CD14-positive monocyte (primary cell): ENCODE measurements at regions of chr12 and their contacts with region 1.

Region 1: GRCh38 chr12:113239811-113240331 is 18.6 kb downstream of the TPCN1 start:
- DNase-seq: no peak
- H3K4me3 ChIP-seq: peak overlapping the region in 1 of 3 experiments; percentile 31
- H3K4me3 Mint-ChIP-seq: no peak overlapping the region
- H3K27ac ChIP-seq: peak overlapping the region; percentile 43 to 86
- H3K27ac Mint-ChIP-seq: peak overlapping the region; percentile 85 to 97 (median 94)
- H3K4me1 ChIP-seq: peaks cover 72 to 80% of the 10 kb centered on the region in 2 donors
- H3K4me1 Mint-ChIP-seq: peaks cover 80% of the 10 kb centered on the region
- H3K27me3 ChIP-seq: no peaks in the 10 kb centered on the region
- H3K27me3 Mint-ChIP-seq: peaks cover 0 to 7% (median 0%) of the 10 kb centered on the region in 3 donors
- CTCF ChIP-seq: no peak

Region 2: GRCh38 chr12:113196996-113197395 is 42.9 kb before region 1 on chr12:
- intact Hi-C with region 1: loop called (anchors 5 kb)
- DNase-seq: peak; percentile 76 to 85 (median 80)
- H3K4me3 ChIP-seq: no peak overlapping the region
- H3K4me3 Mint-ChIP-seq: no peak overlapping the region
- H3K27ac ChIP-seq: no peak overlapping the region
- H3K27ac Mint-ChIP-seq: peak overlapping the region in 2 of 7 donors; percentile 37 to 43
- H3K4me1 ChIP-seq: peaks cover 36 to 37% of the 10 kb centered on the region in 2 donors
- H3K4me1 Mint-ChIP-seq: peaks cover 43% of the 10 kb centered on the region
- H3K27me3 ChIP-seq: no peaks in the 10 kb centered on the region
- H3K27me3 Mint-ChIP-seq: peaks cover 0 to 1% (median 1%) of the 10 kb centered on the region in 3 donors
- CTCF ChIP-seq: peak; percentile 79

Region 3: DNA sequence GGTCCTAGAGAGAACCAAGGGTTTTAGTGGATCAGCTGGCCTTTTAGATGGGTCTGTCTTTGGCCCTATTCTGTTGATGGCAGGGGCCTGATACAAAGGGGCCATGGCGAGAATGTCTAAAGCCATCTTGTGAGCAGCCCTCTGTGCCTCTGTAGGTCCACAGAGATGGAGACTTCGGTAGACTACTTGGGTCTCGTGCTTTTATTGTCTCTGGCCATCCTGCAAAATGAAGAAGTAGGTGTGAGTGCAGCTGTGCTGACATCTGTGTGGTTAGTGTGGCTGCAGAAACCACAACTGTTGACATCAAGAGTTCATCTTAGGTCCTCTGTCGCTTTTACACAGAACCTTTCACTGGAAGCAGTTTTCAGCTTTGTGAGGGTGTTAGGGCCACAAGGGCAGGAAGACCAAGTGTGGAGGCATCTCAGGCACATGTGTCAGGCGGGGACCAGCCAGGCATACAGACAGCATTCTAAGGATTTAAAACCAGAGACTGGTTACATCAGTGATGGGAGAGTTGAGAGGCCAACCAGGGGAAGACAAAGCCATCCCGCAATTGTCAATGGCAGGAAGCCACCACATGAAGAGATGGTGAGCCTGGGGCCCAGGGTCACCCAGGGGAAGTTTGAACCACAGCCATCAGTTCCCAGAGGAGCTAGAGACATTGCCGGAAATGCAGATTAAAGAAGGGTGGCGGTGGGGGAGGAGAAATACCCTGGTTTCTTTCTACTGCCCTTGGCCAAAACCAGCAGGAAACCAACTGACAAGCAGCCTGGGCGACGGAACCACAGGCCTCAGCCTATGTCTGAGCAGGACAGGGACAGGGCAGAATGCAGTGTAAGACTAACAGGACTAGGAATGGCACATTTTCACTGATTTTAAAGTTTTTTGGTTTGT is 31.6 kb before region 1 on chr12:
- intact Hi-C with region 1: loop called in 1 of 2 experiments (anchors 5 kb)
- DNase-seq: peak; percentile 85 to 94 (median 91)
- H3K4me3 ChIP-seq: peak overlapping the region in 1 of 3 experiments; percentile 50
- H3K4me3 Mint-ChIP-seq: peak overlapping the region; percentile 53 to 82
- H3K27ac ChIP-seq: peak overlapping the region; percentile 76 to 89
- H3K27ac Mint-ChIP-seq: peak overlapping the region; percentile 98 to 100 (median 99)
- H3K4me1 ChIP-seq: peaks cover 89 to 99% of the 10 kb centered on the region in 2 donors
- H3K4me1 Mint-ChIP-seq: peaks cover 81% of the 10 kb centered on the region
- H3K27me3 ChIP-seq: no peaks in the 10 kb centered on the region
- H3K27me3 Mint-ChIP-seq: peaks cover 0 to 8% (median 0%) of the 10 kb centered on the region in 3 donors
- CTCF ChIP-seq: no peak

Region 4: GRCh38 chr12:113271853-113272561 is 32.1 kb after region 1 on chr12:
- intact Hi-C with region 1: loop called (anchors 5 kb)
- DNase-seq: peak; percentile 78 to 90 (median 81)
- H3K4me3 ChIP-seq: peak overlapping the region in 1 of 3 experiments; percentile 55
- H3K4me3 Mint-ChIP-seq: peak overlapping the region; percentile 45 to 81
- H3K27ac ChIP-seq: peak overlapping the region; percentile 81 to 84
- H3K27ac Mint-ChIP-seq: peak overlapping the region; percentile 87 to 94 (median 89)
- H3K4me1 ChIP-seq: peaks cover 17% of the 10 kb centered on the region in 2 donors
- H3K4me1 Mint-ChIP-seq: peaks cover 20% of the 10 kb centered on the region
- H3K27me3 ChIP-seq: no peaks in the 10 kb centered on the region
- H3K27me3 Mint-ChIP-seq: peaks cover 0 to 5% (median 0%) of the 10 kb centered on the region in 3 donors
- CTCF ChIP-seq: no peak